GM13977 (cell line): ENCODE measurements at regions of chr7 and their contacts with region 1.

Region 1: GRCh38 chr7:129367700-129368388 is 66.4 kb upstream of the STRIP2 start:
- DNase-seq: peak; percentile 73
- CTCF ChIP-seq: peak; percentile 85

Region 2: GRCh38 chr7:129122751-129123509 is 244.9 kb before region 1 on chr7:
- in situ Hi-C with region 1: no loop called
- DNase-seq: peak; percentile 84
- CTCF ChIP-seq: no peak

Region 3: GRCh38 chr7:129468087-129468486 is 100.2 kb after region 1 on chr7:
- in situ Hi-C with region 1: loop called (anchors 25 kb)
- DNase-seq: no peak
- CTCF ChIP-seq: no peak

Region 4: GRCh38 chr7:129635300-129636029 is 267.6 kb after region 1 on chr7:
- in situ Hi-C with region 1: loop called (anchors 25 kb)
- DNase-seq: peak; percentile 72
- CTCF ChIP-seq: peak; percentile 89